ENCODE measurements at regions of chr11 and their contacts with region 1.

Region 1: DNA sequence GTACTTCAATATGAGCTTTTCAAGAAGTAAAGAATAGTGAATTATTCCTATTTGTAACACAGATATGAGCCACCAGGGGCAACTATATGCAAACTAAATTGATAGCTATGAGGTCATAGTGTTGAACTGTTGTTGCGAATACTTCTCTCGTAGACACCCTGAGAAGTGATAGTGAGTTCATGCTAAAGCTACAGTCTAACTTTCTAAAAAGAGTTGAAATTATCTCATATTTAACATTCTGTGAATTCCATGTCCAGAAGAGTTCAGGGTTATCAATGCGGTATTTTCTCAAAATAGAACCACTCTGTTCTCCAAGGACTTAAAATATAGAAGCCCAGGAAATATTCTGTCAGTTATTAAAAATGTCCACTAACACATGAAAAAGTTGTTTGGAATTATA is 185.4 kb downstream of the AASDHPPT start:
- DNase-seq: no peak
- H3K4me3 Mint-ChIP-seq: no peak overlapping the region
- H3K27ac Mint-ChIP-seq: no peak overlapping the region
- H3K4me1 Mint-ChIP-seq: no peaks in the 10 kb centered on the region
- H3K27me3 Mint-ChIP-seq: no peaks in the 10 kb centered on the region

Region 2: DNA sequence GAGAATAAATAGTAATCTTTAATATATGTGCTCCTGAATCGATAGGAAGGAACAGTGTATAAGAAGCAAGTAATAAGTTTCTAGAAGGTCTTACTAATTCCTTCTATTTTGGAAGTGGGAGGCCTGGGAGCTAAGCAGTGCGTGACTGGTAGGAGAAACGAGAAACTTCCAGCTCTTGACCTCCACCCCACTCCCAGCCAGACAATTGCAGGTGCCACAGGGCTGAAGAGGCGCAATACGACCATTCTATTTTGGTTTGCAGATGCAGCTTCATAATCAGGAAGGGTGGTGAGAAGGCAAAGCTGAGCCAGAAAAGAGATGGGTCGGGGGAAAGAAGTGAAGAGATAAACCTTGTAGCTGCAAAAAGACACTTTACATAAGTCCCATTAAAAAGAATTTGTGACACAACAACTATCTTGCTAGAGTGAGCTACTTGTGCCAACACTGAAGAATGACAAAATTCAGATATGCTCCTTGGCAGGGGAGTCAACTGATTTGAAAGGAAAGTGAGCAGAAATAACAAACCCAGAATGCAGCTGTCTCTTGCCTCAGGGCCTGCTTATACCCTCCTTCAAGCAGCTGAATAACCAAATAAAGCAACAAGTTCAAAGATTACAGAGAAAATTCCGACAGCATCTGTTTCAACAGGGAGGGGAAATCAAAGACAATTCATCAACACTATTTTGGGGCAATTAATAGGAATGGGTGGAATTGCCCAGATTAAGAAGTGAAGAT is 617.8 kb before region 1 on chr11:
- intact Hi-C with region 1: loop called (anchors 5 kb)
- DNase-seq: no peak
- H3K4me3 Mint-ChIP-seq: no peak overlapping the region
- H3K27ac Mint-ChIP-seq: no peak overlapping the region
- H3K4me1 Mint-ChIP-seq: no peaks in the 10 kb centered on the region
- H3K27me3 Mint-ChIP-seq: no peaks in the 10 kb centered on the region